Breast epithelium (tissue), 4 donors: ENCODE measurements at regions of chr1 and their contacts with region 1.

Region 1: GRCh38 chr1:43058545-43059355 is 100.1 kb upstream of the SLC2A1 start:
- DNase-seq: no peak
- H3K4me3 ChIP-seq: no peak overlapping the region
- H3K27ac ChIP-seq: no peak overlapping the region
- H3K4me1 ChIP-seq: no peaks in the 10 kb centered on the region
- H3K27me3 ChIP-seq: no peaks in the 10 kb centered on the region
- CTCF ChIP-seq: no peak
- POLR2A ChIP-seq: no peak

Region 2: GRCh38 chr1:41241782-41242341 is 1816.9 kb before region 1 on chr1 and contains the start of gene SCMH1:
- intact Hi-C with region 1: loop called (anchors 5 kb)
- DNase-seq: peak in 1 of 2 donors; percentile 35
- H3K4me3 ChIP-seq: peak within 1 kb of the TSS; percentile 83 to 91 (median 85)
- H3K27ac ChIP-seq: peak within 1 kb of the TSS; percentile 99
- H3K4me1 ChIP-seq: no peaks in the 10 kb centered on the region
- H3K27me3 ChIP-seq: no peaks in the 10 kb centered on the region
- CTCF ChIP-seq: no peak
- POLR2A ChIP-seq: no peak
- total RNA-seq, gene SCMH1: 37.0 to 93.4 (median 53.4) TPM

Region 3: DNA sequence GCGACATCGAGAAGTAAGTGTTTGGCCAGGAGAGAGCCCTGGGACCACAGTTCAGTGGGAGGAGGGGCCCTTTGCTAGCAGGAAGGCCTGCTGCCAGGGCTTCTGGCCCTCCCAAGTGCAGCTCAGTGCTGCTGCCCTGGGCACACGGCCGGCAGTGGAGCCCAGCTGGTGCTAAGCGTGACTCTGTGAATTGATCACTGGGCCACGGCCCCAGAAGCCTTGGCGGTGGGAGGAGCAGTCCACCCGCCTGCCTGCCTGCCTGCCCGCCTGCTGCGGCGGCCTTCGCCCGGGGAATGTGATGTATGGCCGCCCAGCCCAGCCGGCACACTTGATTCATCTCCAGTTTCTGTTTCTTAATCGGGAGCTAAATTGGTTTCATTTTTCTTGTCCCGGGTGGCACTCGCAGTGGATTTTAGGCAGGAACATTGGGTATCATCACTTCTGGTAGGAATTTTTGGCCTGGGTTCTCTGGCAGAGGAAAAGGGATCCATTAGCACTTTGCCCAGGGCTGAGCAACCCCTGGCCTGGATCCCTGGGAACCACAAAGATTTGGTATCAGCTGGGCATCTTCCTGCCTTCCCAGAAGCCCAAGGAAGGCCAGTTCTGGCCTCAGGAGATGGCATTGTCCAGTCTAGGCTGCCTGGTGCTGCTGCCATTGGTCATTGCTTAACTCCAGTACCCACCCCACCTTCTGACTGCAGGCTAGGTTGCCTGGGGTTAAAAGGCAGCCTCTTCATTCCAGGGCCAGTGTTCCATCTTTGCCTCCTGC is 1586.9 kb after region 1 on chr1:
- intact Hi-C with region 1: no loop called
- DNase-seq: no peak
- H3K4me3 ChIP-seq: peak overlapping the region in 1 of 3 donors; percentile 18
- H3K27ac ChIP-seq: peak overlapping the region; percentile 57 to 79
- H3K4me1 ChIP-seq: peaks cover 0 to 11% of the 10 kb centered on the region in 2 donors
- H3K27me3 ChIP-seq: no peaks in the 10 kb centered on the region
- CTCF ChIP-seq: no peak
- POLR2A ChIP-seq: no peak